Activated CD8-positive, alpha-beta memory T cell treated with anti-CD3 and anti-CD28 coated beads, Interleukin-2, amount 10 ng/mL, durations not matched to agents 7 days and 5 days (primary cell): ENCODE measurements at regions of chr20 and their contacts with region 1.

Region 1: GRCh38 chr20:31822421-31823330 is 3.5 kb downstream of the MYLK2 start:
- DNase-seq: peak; percentile 76
- ATAC-seq: peak; percentile 90
- H3K4me3 Mint-ChIP-seq: no peak overlapping the region
- H3K27ac Mint-ChIP-seq: no peak overlapping the region
- H3K4me1 Mint-ChIP-seq: peaks cover 7% of the 10 kb centered on the region
- H3K27me3 Mint-ChIP-seq: no peaks in the 10 kb centered on the region

Region 2: GRCh38 chr20:31835977-31836852 is 13.5 kb after region 1 on chr20:
- CTCF ChIA-PET with region 1: interaction called, 25 read pairs
- DNase-seq: peak; percentile 77
- ATAC-seq: peak; percentile 61
- H3K4me3 Mint-ChIP-seq: no peak overlapping the region
- H3K27ac Mint-ChIP-seq: no peak overlapping the region
- H3K4me1 Mint-ChIP-seq: peaks cover 25% of the 10 kb centered on the region
- H3K27me3 Mint-ChIP-seq: peaks cover 10% of the 10 kb centered on the region

Region 3: GRCh38 chr20:31849455-31849925 is 26.8 kb after region 1 on chr20:
- CTCF ChIA-PET with region 1: interaction called, 110 read pairs
- DNase-seq: no peak
- ATAC-seq: no peak
- H3K4me3 Mint-ChIP-seq: no peak overlapping the region
- H3K27ac Mint-ChIP-seq: no peak overlapping the region
- H3K4me1 Mint-ChIP-seq: no peaks in the 10 kb centered on the region
- H3K27me3 Mint-ChIP-seq: peaks cover 23% of the 10 kb centered on the region

Region 4: GRCh38 chr20:31936420-31936819 is 113.7 kb after region 1 on chr20:
- CTCF ChIA-PET with region 1: no interaction called
- DNase-seq: no peak
- ATAC-seq: no peak
- H3K4me3 Mint-ChIP-seq: no peak overlapping the region
- H3K27ac Mint-ChIP-seq: no peak overlapping the region
- H3K4me1 Mint-ChIP-seq: no peaks in the 10 kb centered on the region
- H3K27me3 Mint-ChIP-seq: peaks cover 1% of the 10 kb centered on the region

Region 5: DNA sequence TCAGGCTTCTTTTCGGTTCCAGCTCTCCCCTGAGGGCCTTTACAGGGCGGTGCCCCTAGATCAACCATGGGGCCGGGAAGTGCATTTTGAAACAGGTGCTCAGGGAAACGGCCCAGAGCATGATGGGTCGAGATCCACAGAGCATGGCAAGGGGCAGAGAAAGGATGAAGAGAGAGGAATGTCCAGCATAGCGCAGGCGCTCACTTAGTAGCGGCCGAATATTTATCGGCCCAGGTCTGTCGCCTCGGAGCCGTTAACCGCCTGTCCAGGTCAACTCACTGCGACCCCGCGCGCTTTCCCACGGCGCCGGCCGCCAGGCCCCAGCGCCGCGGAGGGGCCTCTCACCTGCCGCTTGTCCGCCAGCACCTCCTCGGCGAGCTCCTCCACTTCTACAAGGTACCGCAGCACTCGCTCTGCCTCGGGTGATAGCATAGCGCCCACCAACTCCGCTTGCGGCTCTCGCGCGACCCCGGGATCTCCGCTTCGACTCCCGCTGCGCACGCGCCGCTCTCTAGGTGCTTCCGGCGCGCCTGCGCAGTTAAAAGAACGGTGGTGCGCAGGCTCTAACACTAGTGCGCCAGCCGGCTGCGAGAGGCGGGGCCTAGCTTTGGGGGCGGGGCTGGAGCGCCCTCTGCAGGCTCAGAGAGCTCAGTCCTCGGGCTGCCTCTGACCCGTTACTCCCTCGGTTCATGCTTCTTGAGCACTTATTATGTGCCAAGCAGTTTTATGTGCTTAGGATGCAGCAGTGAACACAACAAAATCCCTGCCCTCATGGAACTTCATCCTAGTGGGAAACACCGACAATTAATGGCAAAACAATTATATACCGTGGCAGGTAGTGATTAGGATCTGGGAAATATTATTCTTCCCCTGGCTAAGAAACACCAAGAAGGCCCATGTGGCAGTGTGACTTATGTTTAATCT is 129.1 kb after region 1 on chr20 and contains the start of gene PDRG1:
- CTCF ChIA-PET with region 1: interaction called, 16 read pairs
- DNase-seq: peak; percentile 98
- ATAC-seq: peak; percentile 98
- H3K4me3 Mint-ChIP-seq: peak within 1 kb of the TSS; percentile 90
- H3K27ac Mint-ChIP-seq: peak within 1 kb of the TSS; percentile 93
- H3K4me1 Mint-ChIP-seq: peaks cover 25% of the 10 kb centered on the region
- H3K27me3 Mint-ChIP-seq: peaks cover 13% of the 10 kb centered on the region
- total RNA-seq, gene PDRG1: 14.9 to 15.6 TPM